Caco-2 (cell line): ENCODE measurements at regions of chr4 and their contacts with region 1.

Region 1: GRCh38 chr4:14184265-14184664 is 556.7 kb upstream of the BOD1L1 start:
- DNase-seq: no peak
- H3K4me3 ChIP-seq: no peak overlapping the region
- H3K4me3 Mint-ChIP-seq: no peak overlapping the region
- H3K27ac Mint-ChIP-seq: no peak overlapping the region
- H3K4me1 ChIP-seq: peaks cover 32% of the 10 kb centered on the region
- H3K4me1 Mint-ChIP-seq: peaks cover 9% of the 10 kb centered on the region
- H3K27me3 ChIP-seq: no peaks in the 10 kb centered on the region
- H3K27me3 Mint-ChIP-seq: no peaks in the 10 kb centered on the region
- CTCF ChIP-seq: no peak

Region 2: DNA sequence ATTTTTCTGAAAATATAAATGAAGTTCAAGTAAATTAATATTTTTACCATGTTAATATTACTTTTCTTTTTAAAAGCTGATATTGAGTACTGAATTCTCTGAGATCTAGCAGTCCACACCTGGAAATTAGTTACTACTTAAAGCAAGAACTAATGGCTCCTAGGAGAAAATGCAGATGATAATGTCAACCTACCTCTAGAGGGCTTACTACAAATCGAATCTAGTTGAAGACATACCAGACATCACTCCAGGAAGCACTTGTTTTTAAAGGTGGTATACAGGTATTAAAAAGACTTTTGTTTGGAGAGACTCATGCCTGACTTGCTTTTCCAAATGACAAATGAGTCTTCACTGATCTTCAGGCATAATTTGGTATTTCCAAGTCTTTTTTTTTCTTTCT is 40.4 kb before region 1 on chr4:
- CTCF ChIA-PET with region 1: no interaction called
- POLR2A ChIA-PET with region 1: no interaction called
- intact Hi-C with region 1: loop called (anchors 5 kb)
- DNase-seq: no peak
- H3K4me3 ChIP-seq: no peak overlapping the region
- H3K4me3 Mint-ChIP-seq: no peak overlapping the region
- H3K27ac Mint-ChIP-seq: no peak overlapping the region
- H3K4me1 ChIP-seq: no peaks in the 10 kb centered on the region
- H3K4me1 Mint-ChIP-seq: no peaks in the 10 kb centered on the region
- H3K27me3 ChIP-seq: no peaks in the 10 kb centered on the region
- H3K27me3 Mint-ChIP-seq: no peaks in the 10 kb centered on the region
- CTCF ChIP-seq: no peak

Region 3: GRCh38 chr4:14225747-14226146 is 41.5 kb after region 1 on chr4:
- CTCF ChIA-PET with region 1: interaction called, 3 read pairs
- POLR2A ChIA-PET with region 1: no interaction called
- intact Hi-C with region 1: loop called (anchors 2 kb)
- DNase-seq: peak in 1 of 2 experiments; percentile 35
- H3K4me3 ChIP-seq: no peak overlapping the region
- H3K4me3 Mint-ChIP-seq: no peak overlapping the region
- H3K27ac Mint-ChIP-seq: no peak overlapping the region
- H3K4me1 ChIP-seq: no peaks in the 10 kb centered on the region
- H3K4me1 Mint-ChIP-seq: peaks cover 7% of the 10 kb centered on the region
- H3K27me3 ChIP-seq: no peaks in the 10 kb centered on the region
- H3K27me3 Mint-ChIP-seq: peaks cover 3% of the 10 kb centered on the region
- CTCF ChIP-seq: no peak

Region 4: DNA sequence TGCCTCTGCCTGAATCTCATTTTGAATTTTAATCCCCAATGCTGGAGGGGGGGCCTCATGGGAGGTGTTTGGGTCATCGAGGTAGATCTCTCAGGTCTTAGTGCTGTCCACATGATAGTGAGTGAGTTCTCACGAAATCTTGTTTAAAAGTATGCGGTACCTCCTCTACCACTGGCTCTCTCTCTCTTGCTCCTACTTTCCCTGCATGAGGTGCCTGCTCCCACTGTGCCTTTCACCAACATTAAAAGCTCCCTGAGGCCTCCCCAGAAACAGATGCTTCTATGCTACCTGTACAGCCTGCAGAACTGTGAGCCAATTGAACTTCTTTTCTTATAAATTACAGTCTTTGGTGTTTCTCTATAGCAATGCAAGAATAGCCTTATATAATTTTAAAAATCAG is 257.3 kb after region 1 on chr4:
- CTCF ChIA-PET with region 1: no interaction called
- POLR2A ChIA-PET with region 1: no interaction called
- intact Hi-C with region 1: no loop called
- DNase-seq: no peak
- H3K4me3 ChIP-seq: no peak overlapping the region
- H3K4me3 Mint-ChIP-seq: no peak overlapping the region
- H3K27ac Mint-ChIP-seq: no peak overlapping the region
- H3K4me1 ChIP-seq: no peaks in the 10 kb centered on the region
- H3K4me1 Mint-ChIP-seq: no peaks in the 10 kb centered on the region
- H3K27me3 ChIP-seq: no peaks in the 10 kb centered on the region
- H3K27me3 Mint-ChIP-seq: peaks cover 4% of the 10 kb centered on the region
- CTCF ChIP-seq: no peak

Region 5: GRCh38 chr4:14452764-14453163 is 268.5 kb after region 1 on chr4:
- CTCF ChIA-PET with region 1: no interaction called
- POLR2A ChIA-PET with region 1: no interaction called
- intact Hi-C with region 1: no loop called
- DNase-seq: no peak
- H3K4me3 ChIP-seq: no peak overlapping the region
- H3K4me3 Mint-ChIP-seq: no peak overlapping the region
- H3K27ac Mint-ChIP-seq: no peak overlapping the region
- H3K4me1 ChIP-seq: no peaks in the 10 kb centered on the region
- H3K4me1 Mint-ChIP-seq: no peaks in the 10 kb centered on the region
- H3K27me3 ChIP-seq: no peaks in the 10 kb centered on the region
- H3K27me3 Mint-ChIP-seq: peaks cover 3% of the 10 kb centered on the region
- CTCF ChIP-seq: no peak